Activated B cell treated with CpG ODN at 0.5 μM for 24 hours (primary cell): ENCODE measurements at regions of chr1 and their contacts with region 1.

Region 1: DNA sequence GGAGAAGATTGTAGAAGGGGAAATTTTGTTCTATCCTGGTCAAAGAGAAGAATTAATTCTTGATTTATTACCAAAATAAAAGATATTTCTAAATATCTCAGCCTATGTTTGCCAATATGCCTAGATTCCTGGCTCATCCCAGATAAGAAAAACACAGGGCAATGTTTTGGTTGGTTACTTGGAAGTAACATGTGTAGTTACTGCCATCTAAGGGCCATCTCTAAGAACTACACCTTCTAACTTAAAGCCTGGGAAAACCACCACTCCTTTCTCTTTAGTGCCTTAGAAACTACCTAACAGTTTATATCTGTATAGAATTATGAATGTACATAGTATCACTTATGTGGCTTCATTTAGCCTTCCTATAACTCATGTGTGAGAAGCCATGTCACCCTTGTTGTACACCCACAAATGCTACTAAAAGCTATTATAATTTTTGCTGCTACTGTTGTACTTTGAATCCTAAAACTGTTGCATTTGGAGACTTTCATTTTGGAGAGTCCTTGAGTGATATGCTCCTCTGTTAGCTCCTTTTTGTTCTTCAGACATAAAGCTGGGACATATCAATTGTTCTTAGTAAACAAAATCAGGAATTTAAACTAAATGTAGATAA is 4.5 kb downstream of the AIM2 start:
- DNase-seq: no peak
- ATAC-seq: no peak
- H3K4me3 Mint-ChIP-seq: peak overlapping the region; percentile 52
- H3K27ac Mint-ChIP-seq: peak overlapping the region; percentile 98
- H3K4me1 Mint-ChIP-seq: peaks cover 78% of the 10 kb centered on the region
- H3K27me3 Mint-ChIP-seq: no peaks in the 10 kb centered on the region
- CTCF ChIP-seq: peak; percentile 51

Region 2: DNA sequence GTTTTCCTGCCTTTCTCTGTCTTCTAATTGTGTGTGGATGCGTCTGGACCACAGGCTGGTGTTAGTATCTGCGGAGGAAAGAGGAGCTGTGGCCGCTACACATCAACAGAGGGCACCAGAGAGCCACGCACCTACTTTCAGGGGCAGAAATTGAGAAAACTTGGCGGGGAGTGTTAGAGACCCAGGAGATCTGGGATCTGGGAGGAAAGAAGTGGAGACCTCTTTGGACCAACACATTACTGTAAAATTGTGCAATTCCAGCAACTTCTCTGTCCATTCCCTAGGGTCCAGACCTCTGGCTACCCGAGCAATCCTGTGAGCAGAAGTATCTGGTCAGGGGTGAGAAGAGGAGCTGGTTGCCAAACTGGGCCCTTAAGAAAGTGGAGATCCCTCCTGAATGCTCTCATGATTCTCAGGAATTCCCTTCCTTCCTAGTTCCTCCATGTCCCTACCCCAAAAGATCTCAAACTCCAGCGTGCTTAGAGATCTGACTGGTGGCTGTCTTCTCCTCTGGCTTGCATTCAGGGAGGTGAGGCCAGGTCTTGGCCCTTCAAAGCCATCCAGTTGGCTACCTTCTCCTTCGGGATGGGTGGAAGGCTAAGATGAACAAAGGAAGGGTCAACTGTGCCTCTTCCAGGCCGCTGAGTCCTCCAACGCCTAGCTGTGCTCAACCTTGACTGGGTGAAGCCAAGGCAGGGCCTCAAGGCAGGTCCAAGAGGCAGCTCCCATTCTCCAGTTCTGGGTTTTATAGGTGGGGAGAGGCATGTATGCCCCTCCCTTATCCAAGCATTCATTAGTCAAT is 1079.8 kb before region 1 on chr1:
- CTCF ChIA-PET with region 1: no interaction called
- POLR2A ChIA-PET with region 1: no interaction called
- intact Hi-C with region 1: loop called (anchors 10 kb)
- DNase-seq: peak; percentile 46
- ATAC-seq: peak; percentile 68
- H3K4me3 Mint-ChIP-seq: peak overlapping the region; percentile 79
- H3K27ac Mint-ChIP-seq: no peak overlapping the region
- H3K4me1 Mint-ChIP-seq: peaks cover 16% of the 10 kb centered on the region
- H3K27me3 Mint-ChIP-seq: peaks cover 41% of the 10 kb centered on the region
- CTCF ChIP-seq: peak; percentile 30

Region 3: GRCh38 chr1:158203693-158204457 is 868.2 kb before region 1 on chr1:
- CTCF ChIA-PET with region 1: interaction called, 10 read pairs
- POLR2A ChIA-PET with region 1: interaction called, 3 read pairs
- intact Hi-C with region 1: loop called (anchors 5 kb)
- DNase-seq: no peak
- ATAC-seq: peak; percentile 69
- H3K4me3 Mint-ChIP-seq: peak overlapping the region; percentile 49
- H3K27ac Mint-ChIP-seq: peak overlapping the region; percentile 41
- H3K4me1 Mint-ChIP-seq: peaks cover 23% of the 10 kb centered on the region
- H3K27me3 Mint-ChIP-seq: no peaks in the 10 kb centered on the region
- CTCF ChIP-seq: no peak

Region 4: GRCh38 chr1:158329733-158330132 is 742.3 kb before region 1 on chr1:
- CTCF ChIA-PET with region 1: interaction called, 18 read pairs
- POLR2A ChIA-PET with region 1: no interaction called
- intact Hi-C with region 1: loop called (anchors 1 kb)
- DNase-seq: no peak
- ATAC-seq: peak; percentile 47
- H3K4me3 Mint-ChIP-seq: no peak overlapping the region
- H3K27ac Mint-ChIP-seq: no peak overlapping the region
- H3K4me1 Mint-ChIP-seq: peaks cover 26% of the 10 kb centered on the region
- H3K27me3 Mint-ChIP-seq: no peaks in the 10 kb centered on the region
- CTCF ChIP-seq: no peak

Region 5: DNA sequence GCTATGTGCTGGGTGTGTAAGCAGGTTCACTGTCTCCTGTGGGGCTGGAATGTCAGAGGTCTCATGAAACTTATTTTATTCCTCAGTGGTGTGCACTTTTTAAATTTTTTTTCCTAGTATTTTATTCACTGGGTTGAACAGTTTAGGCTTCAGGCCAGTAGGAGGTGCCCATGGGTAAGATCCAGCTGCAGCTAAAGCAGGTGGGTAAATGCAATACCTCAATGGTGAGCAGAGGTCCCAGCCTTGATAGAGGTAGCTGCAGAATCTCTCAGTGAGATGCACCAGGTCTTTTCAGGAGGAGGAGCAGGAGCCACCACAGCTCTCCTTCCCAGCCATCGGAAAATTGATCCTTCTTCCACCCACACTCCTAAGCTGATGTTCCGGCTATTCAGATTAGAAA is 278.5 kb before region 1 on chr1:
- CTCF ChIA-PET with region 1: interaction called, 8 read pairs
- POLR2A ChIA-PET with region 1: no interaction called
- intact Hi-C with region 1: loop called (anchors 1 kb)
- DNase-seq: no peak
- ATAC-seq: peak; percentile 37
- H3K4me3 Mint-ChIP-seq: no peak overlapping the region
- H3K27ac Mint-ChIP-seq: no peak overlapping the region
- H3K4me1 Mint-ChIP-seq: no peaks in the 10 kb centered on the region
- H3K27me3 Mint-ChIP-seq: peaks cover 6% of the 10 kb centered on the region
- CTCF ChIP-seq: no peak

Region 6: DNA sequence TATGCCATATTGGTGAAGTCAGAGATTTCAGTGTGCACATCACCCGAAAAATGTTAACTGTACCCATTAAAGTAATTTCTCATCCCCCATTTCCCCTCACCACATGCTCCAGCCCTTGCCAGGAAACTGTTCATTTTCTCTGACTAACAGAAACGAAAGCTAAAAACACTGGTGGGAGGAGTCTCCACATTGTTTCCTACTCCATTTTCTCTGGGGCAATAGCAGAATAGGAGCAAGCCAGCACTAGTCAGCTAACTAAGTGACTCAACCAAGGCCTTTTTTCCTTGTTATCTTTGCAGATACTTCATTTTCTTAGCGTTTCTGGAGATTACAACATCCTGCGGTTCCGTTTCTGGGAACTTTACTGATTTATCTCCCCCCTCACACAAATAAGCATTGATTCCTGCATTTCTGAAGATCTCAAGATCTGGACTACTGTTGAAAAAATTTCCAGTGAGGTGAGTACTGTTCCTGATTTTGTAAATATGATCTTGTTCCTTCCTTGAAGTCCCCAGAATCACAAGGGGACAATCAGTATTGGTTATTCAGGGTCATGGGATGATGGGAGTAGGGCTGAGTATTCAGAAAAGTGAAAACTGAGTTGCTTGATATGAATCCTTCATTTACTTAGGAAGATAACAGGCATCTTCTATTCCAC is 62.2 kb before region 1 on chr1 and contains the start of gene IFI16:
- CTCF ChIA-PET with region 1: interaction called, 12 read pairs
- POLR2A ChIA-PET with region 1: interaction called, 75 read pairs
- intact Hi-C with region 1: loop called (anchors 1 kb)
- DNase-seq: no peak
- ATAC-seq: peak; percentile 61
- H3K4me3 Mint-ChIP-seq: peak within 1 kb of the TSS; percentile 91
- H3K27ac Mint-ChIP-seq: peak within 1 kb of the TSS; percentile 93
- H3K4me1 Mint-ChIP-seq: peaks cover 72% of the 10 kb centered on the region
- H3K27me3 Mint-ChIP-seq: no peaks in the 10 kb centered on the region
- CTCF ChIP-seq: no peak
- total RNA-seq, gene IFI16: 145 and 160 TPM in 2 replicates

Region 7: DNA sequence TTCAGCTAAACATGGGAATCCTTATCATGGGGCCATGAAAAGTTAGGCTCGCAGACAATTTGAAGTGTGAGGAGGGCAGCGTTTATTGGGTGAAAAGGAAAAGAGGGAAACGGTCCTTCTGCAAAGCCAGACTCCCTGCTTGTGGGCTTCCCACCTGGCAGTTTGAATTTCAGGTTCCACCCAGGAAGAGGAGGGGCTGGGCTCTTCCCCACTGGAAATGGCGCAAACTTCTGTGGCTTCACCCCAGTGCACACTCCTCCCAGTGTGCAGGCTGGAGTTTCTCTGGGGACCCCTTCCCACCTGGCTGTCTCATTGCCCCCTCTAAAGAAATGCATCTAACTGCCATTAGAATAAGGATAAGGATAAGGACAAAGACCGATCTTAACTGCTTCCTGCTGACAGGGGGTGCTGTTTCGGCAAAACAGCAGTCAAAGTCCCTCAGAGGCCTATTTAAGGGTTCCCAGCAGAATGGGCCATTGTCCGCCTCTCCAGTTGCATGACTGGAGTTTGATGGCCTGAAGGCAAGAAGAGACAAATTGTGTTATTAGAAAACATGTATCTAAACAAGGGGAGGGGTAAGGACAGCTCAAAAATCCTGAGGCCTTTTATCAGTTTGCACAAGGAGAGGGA is 15.9 kb before region 1 on chr1:
- CTCF ChIA-PET with region 1: interaction called, 124 read pairs
- POLR2A ChIA-PET with region 1: interaction called, 92 read pairs
- intact Hi-C with region 1: loop called (anchors 1 kb)
- DNase-seq: no peak
- ATAC-seq: no peak
- H3K4me3 Mint-ChIP-seq: no peak overlapping the region
- H3K27ac Mint-ChIP-seq: peak overlapping the region; percentile 84
- H3K4me1 Mint-ChIP-seq: peaks cover 89% of the 10 kb centered on the region
- H3K27me3 Mint-ChIP-seq: no peaks in the 10 kb centered on the region
- CTCF ChIP-seq: no peak